ENCODE measurements at regions of chr3 and their contacts with region 1.

Region 1: DNA sequence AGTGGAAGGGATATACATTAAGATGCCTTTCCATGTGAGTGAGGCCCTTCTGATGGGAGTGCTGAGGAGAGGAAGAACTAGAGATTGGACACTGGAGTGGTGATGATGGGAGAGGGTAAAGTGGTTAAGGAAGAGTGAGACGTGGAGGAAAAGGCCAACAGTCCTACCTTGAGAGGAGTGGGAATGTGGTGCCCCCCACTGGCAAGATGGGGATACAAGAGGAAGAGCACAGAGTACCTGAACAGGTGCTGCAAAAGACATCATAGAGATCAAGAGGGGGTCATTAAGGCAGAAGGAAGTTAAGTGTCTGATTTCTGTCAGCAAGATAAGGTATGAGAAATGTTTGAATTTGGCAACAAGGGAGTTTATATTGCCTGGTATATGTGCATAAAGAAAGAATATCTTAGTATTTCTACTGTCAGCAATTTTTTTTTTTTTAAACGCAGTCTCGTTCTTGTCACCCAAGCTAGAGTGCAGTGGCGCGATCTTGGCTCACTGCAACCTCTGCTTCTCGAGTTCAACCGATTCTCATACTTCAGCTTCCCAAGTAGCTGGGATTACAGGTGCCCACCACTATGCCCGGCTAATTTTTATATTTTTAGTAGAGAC is 34.0 kb downstream of the ARIH2 start:
- DNase-seq: peak; percentile 58
- ATAC-seq: peak; percentile 79
- H3K4me3 Mint-ChIP-seq: no peak overlapping the region
- H3K27ac Mint-ChIP-seq: peak overlapping the region; percentile 0
- H3K4me1 Mint-ChIP-seq: peaks cover 7% of the 10 kb centered on the region
- H3K27me3 Mint-ChIP-seq: no peaks in the 10 kb centered on the region

Region 2: GRCh38 chr3:48848816-48849515 is 103.6 kb before region 1 on chr3:
- CTCF ChIA-PET with region 1: no interaction called
- POLR2A ChIA-PET with region 1: no interaction called
- DNase-seq: no peak
- ATAC-seq: no peak
- H3K4me3 Mint-ChIP-seq: peak overlapping the region; percentile 85
- H3K27ac Mint-ChIP-seq: no peak overlapping the region
- H3K4me1 Mint-ChIP-seq: peaks cover 28% of the 10 kb centered on the region
- H3K27me3 Mint-ChIP-seq: no peaks in the 10 kb centered on the region

Region 3: DNA sequence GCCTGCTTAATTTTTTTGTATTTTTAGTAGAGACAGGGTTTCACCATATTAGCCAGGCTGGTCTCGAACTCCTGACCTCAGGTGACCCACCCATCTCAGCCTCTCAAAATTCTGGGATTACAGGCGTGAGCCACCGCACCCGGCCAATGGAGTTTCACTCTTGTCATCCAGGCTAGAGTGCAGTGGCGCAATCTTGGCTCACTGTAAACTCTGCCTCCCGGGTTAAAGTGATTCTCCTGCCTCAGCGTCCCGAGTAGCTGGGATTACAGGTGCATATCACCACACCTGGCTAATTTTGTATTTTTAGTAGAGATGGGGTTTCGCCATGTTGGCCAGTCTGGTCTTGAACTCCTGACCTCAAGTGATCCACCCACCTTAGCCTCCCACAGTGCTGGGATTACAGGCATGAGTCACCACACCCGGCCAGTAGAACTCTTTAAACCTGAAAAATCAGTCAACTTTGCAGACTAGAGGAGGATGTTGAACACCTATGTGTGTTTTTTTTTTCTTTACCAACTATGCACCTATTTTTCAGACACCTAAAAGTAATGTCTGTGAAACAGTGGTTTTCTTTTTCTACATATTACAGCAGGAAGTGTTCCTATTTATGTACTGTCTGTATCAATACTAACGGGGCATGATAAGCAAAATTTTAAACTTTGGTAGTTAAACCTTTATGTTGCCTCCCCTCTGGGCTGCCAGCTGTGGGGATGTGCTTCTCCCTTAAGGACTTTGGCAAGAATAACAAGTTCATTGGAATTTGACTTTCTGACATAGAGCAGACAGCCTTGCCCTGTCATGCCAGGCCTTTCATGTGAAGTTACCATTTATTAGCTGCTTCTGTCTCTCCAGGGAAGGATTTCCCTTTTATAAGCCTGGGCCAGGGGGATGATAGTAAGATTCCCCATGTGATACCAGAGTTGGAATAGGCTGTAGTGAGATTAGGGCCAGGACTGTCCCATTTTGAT is 25.9 kb before region 1 on chr3:
- CTCF ChIA-PET with region 1: interaction called, 15 read pairs
- POLR2A ChIA-PET with region 1: no interaction called
- DNase-seq: no peak
- ATAC-seq: no peak
- H3K4me3 Mint-ChIP-seq: no peak overlapping the region
- H3K27ac Mint-ChIP-seq: peak overlapping the region; percentile 40
- H3K4me1 Mint-ChIP-seq: peaks cover 63% of the 10 kb centered on the region
- H3K27me3 Mint-ChIP-seq: no peaks in the 10 kb centered on the region